A673 (cell line): ENCODE measurements at regions of chr10 and their contacts with region 1.

Region 1: GRCh38 chr10:13586676-13587355 is at the start of gene PRPF18:
- DNase-seq: peak; percentile 96
- H3K4me3 ChIP-seq: peak within 1 kb of the TSS; percentile 69
- H3K27ac ChIP-seq: no peak within 1 kb of the TSS
- H3K4me1 ChIP-seq: no peaks in the 10 kb centered on the region
- H3K27me3 ChIP-seq: peaks cover 22% of the 10 kb centered on the region
- CTCF ChIP-seq: peak; percentile 98
- total RNA-seq, gene PRPF18: 21.9 and 22.9 TPM in 2 replicates

Region 2: GRCh38 chr10:13597909-13598308 is 11.1 kb after region 1 on chr10:
- CTCF ChIA-PET with region 1: no interaction called
- POLR2A ChIA-PET with region 1: interaction called, 20 read pairs
- intact Hi-C with region 1: no loop called
- DNase-seq: no peak
- H3K4me3 ChIP-seq: no peak overlapping the region
- H3K27ac ChIP-seq: no peak overlapping the region
- H3K4me1 ChIP-seq: no peaks in the 10 kb centered on the region
- H3K27me3 ChIP-seq: no peaks in the 10 kb centered on the region
- CTCF ChIP-seq: no peak

Region 3: GRCh38 chr10:13615650-13616300 is 29.0 kb after region 1 on chr10:
- CTCF ChIA-PET with region 1: no interaction called
- POLR2A ChIA-PET with region 1: no interaction called
- intact Hi-C with region 1: no loop called
- DNase-seq: peak; percentile 26
- H3K4me3 ChIP-seq: no peak overlapping the region
- H3K27ac ChIP-seq: no peak overlapping the region
- H3K4me1 ChIP-seq: peaks cover 40% of the 10 kb centered on the region
- H3K27me3 ChIP-seq: no peaks in the 10 kb centered on the region
- CTCF ChIP-seq: no peak

Region 4: GRCh38 chr10:13882112-13882711 is 295.4 kb after region 1 on chr10:
- CTCF ChIA-PET with region 1: no interaction called
- POLR2A ChIA-PET with region 1: no interaction called
- intact Hi-C with region 1: no loop called
- DNase-seq: peak; percentile 36
- H3K4me3 ChIP-seq: no peak overlapping the region
- H3K27ac ChIP-seq: no peak overlapping the region
- H3K4me1 ChIP-seq: no peaks in the 10 kb centered on the region
- H3K27me3 ChIP-seq: no peaks in the 10 kb centered on the region
- CTCF ChIP-seq: no peak